ENCODE measurements at regions of chrX and their contacts with region 1.

Region 1: DNA sequence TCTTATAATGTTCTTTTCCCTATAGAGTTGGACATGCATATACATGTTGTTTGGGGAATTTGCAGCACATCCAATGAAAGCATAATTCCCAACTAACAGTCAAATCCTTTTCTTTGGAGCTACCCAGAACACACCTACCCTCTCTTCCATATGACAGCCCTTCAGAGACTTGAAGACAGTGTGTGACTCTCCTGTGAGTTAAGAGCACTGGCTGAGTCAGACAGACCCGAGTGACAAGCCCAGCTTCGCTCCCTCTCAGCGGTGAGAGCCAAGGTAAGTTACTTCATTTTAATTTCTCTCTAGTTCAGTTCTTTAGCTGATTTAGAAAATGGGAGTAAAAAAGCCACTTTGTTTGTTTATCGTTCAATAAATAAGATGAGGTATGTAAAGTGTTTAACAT is 86.3 kb downstream of the RTL9 start:
- DNase-seq: no peak
- ATAC-seq: no peak
- H3K4me3 ChIP-seq: no peak overlapping the region
- H3K27ac ChIP-seq: no peak overlapping the region
- H3K4me1 ChIP-seq: no peaks in the 10 kb centered on the region
- H3K27me3 ChIP-seq: no peaks in the 10 kb centered on the region
- CTCF ChIP-seq: no peak
- POLR2A ChIP-seq: no peak

Region 2: DNA sequence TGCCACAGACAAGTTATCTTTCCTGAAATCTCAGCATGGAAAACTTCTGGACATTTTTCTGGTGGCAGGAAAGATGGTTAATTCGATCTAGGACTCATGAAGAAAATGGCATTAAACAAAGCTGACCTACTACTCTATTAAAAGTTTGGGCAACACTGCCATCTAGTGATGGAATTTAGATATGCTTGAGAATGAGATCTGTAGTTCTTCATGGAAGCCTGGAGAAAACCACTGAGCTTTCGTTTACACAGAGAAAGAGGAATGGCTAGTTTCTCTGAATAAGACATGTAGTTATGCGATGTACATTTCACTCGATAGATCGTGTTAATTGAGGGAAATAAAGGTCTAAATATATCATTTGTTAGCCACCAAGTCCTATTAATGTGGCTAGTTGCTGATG is 402.3 kb after region 1 on chrX:
- intact Hi-C with region 1: loop called (anchors 5 kb)
- DNase-seq: peak in 1 of 4 donors; percentile 25
- ATAC-seq: peak; percentile 85
- H3K4me3 ChIP-seq: no peak overlapping the region
- H3K27ac ChIP-seq: no peak overlapping the region
- H3K4me1 ChIP-seq: peaks cover 7% of the 10 kb centered on the region
- H3K27me3 ChIP-seq: no peaks in the 10 kb centered on the region
- CTCF ChIP-seq: peak; percentile 21 to 80 (median 55)
- POLR2A ChIP-seq: no peak